ENCODE measurements at regions of chr13 and their contacts with region 1.

Region 1: DNA sequence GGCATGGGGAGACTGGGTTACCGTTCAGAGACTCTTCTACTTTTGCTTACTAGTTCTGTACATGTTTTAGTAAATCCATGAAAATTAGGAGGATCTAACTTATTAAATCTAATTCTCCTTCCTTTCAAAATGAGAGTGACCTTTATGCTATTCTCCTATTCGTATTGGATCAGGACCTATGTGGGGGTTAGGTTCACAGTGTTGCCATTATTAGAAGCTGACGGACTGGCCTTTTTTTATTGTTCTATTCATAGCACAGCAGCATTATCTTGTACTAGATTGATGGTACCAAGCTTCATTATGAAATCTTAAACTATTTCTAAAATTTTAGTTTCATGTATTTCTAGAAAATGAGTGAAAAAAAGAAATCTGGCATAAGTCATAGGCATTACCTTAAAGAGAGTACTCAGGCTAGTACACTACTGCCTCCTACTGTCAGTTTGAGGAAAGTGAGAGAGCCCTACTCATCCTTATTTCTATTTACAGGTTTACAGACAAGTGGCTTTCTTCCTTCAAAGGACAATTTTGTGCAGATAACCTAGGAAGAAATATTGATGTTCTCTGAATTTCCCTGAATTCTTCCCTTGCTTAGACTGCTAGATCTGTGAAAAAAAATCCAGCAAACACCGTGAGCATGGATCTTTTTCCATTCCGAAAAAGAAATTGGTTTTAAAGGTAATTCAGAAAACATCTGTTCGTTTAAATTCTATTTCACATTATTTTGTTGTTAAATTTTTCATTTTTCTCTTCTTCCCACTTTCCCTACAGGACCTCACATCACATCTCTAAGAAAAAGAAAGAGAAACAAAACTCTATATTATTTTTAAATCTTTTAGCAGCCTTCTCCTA is 485.5 kb downstream of the DIAPH3 start:
- DNase-seq: no peak
- H3K4me3 Mint-ChIP-seq: no peak overlapping the region
- H3K27ac Mint-ChIP-seq: no peak overlapping the region
- H3K4me1 Mint-ChIP-seq: no peaks in the 10 kb centered on the region
- H3K27me3 Mint-ChIP-seq: no peaks in the 10 kb centered on the region

Region 2: GRCh38 chr13:59477011-59477410 is 201.2 kb before region 1 on chr13:
- intact Hi-C with region 1: no loop called
- DNase-seq: no peak
- H3K4me3 Mint-ChIP-seq: no peak overlapping the region
- H3K27ac Mint-ChIP-seq: no peak overlapping the region
- H3K4me1 Mint-ChIP-seq: no peaks in the 10 kb centered on the region
- H3K27me3 Mint-ChIP-seq: no peaks in the 10 kb centered on the region

Region 3: DNA sequence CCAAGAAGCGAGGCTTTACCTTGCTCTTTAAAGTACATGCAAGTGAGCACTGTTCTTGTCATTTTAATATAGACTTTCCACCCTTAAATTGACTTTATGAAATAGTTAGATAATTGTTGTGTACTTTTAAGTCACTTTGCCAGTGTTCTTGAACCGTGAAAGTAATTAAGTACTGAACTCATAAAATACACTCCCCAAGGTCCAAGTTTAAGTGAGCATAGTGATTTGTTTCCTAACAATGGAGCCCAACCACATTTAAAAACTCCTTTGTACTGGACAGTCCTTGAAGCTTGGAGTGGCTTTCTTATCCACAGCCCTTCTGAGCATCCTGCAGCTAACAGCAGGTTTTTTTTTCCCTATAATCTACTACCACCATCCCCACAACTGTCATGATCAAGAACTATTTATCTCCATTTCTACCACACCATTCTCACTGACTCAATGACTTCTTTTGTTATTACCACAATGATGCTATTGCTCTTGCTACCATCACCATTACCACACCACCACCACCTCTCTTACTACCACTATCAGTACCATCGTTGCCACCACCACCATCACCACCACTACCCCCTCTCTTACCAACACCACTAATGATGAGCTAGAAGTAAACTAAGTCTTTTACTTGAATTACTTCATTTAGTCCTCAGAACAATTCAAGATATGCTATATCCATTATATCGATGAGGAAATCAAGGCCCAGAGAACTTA is 33.0 kb after region 1 on chr13:
- intact Hi-C with region 1: no loop called
- DNase-seq: no peak
- H3K4me3 Mint-ChIP-seq: no peak overlapping the region
- H3K27ac Mint-ChIP-seq: no peak overlapping the region
- H3K4me1 Mint-ChIP-seq: no peaks in the 10 kb centered on the region
- H3K27me3 Mint-ChIP-seq: no peaks in the 10 kb centered on the region

Region 4: DNA sequence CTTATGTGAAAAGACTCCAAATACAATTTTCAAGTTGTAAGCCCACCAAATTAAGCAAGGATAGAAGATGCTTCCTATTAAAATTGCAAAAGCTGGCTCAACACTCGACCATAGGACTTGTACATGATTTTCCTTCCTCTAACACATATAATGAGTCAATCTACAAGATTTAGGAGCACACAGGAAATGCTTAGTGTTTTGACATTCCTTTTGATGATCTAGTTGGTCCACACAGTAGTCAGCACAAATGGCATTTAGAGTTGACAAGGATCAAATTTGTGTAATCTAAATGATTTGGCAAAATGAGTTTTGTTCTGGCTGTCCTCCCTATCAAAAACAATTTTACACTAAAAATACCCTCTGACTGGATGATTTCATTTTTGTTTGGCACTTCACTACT is 145.3 kb after region 1 on chr13:
- intact Hi-C with region 1: no loop called
- DNase-seq: no peak
- H3K4me3 Mint-ChIP-seq: no peak overlapping the region
- H3K27ac Mint-ChIP-seq: no peak overlapping the region
- H3K4me1 Mint-ChIP-seq: no peaks in the 10 kb centered on the region
- H3K27me3 Mint-ChIP-seq: no peaks in the 10 kb centered on the region

Region 5: DNA sequence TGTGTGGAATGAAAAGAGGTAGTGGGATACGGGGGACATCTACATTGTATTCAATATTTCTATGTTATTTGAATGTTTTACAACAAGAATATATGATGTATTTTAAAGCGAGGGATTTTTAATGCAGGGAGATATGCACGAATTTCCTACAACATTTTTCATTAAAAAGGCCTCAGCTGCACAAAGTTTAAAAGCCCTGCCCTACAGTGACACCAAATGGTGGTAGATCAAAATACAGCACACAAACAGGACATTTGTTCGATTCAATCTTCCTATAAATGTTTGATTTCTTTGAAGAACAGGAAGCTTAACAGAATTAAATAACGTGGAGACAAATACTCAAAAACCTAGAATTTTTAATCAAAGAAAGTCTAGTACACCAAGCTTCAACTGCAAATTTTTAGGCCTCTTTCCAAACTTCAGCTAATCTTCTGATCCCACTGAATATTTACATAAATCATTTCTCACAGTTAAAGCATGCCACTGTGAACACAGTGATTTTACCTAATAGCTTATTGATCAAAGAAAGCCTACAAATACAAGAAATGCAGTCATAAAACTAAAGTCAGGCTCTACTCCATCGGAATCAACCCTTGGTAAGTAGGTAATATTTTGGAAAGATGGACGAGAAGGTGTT is 228.3 kb after region 1 on chr13:
- intact Hi-C with region 1: loop called (anchors 1 kb)
- DNase-seq: no peak
- H3K4me3 Mint-ChIP-seq: no peak overlapping the region
- H3K27ac Mint-ChIP-seq: no peak overlapping the region
- H3K4me1 Mint-ChIP-seq: peaks cover under 1% of the 10 kb centered on the region
- H3K27me3 Mint-ChIP-seq: no peaks in the 10 kb centered on the region

Region 6: GRCh38 chr13:60335531-60335930 is 657.3 kb after region 1 on chr13:
- intact Hi-C with region 1: loop called (anchors 1 kb)
- DNase-seq: no peak
- H3K4me3 Mint-ChIP-seq: no peak overlapping the region
- H3K27ac Mint-ChIP-seq: no peak overlapping the region
- H3K4me1 Mint-ChIP-seq: no peaks in the 10 kb centered on the region
- H3K27me3 Mint-ChIP-seq: peaks cover 17% of the 10 kb centered on the region

Measured in activated T-helper 1 cell treated with anti-CD3 and anti-CD28 coated beads, Interleukin-12 subunit alpha, Interleukin-12 subunit beta, Interleukin-2, Interleukin-4 antibody, amounts not matched to agents 30 ng/mL and 10 ng/mL and 1 ng/mL, durations not matched to agents 14 hours and 24 hours and 36 hours (primary cell).